A549 (cell line): ENCODE measurements at regions of chr20 and their contacts with region 1.

Region 1: GRCh38 chr20:9407805-9408421 is 106.5 kb upstream of the LAMP5 start:
- DNase-seq: peak; percentile 71 to 77
- ATAC-seq: peak; percentile 94 to 97
- H3K4me3 ChIP-seq: no peak overlapping the region
- H3K27ac ChIP-seq: no peak overlapping the region
- H3K4me1 ChIP-seq: peaks cover 16% of the 10 kb centered on the region; the same call in 2 of the 3 replicates
- CTCF ChIP-seq: peak; percentile 97
- EP300 ChIP-seq: no peak
- POLR2A ChIP-seq: no peak
- RAD21 ChIP-seq: peak; percentile 95 to 97

Region 2: DNA sequence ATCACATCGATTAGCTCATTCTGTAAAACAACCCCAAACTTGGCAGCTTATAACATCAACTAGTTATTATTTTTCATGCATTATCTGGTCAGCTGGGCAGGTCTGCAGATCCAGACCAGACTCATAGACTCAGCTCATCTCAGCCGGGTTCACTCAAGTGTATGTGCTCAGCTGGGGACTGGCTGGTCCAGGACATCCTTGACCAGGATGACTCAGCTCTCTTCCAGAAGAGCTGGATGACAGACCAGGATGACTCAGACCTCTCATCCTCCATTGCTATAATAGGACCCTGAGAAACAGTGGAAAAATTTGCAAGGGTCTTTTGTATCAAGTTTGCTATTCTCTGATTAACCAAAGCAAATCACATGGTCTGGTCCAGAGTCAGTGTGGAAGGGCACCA is 651.5 kb before region 1 on chr20:
- CTCF ChIA-PET with region 1: interaction called, 12 read pairs
- POLR2A ChIA-PET with region 1: no interaction called
- DNase-seq: peak; percentile 87 to 93
- ATAC-seq: peak; percentile 96
- H3K4me3 ChIP-seq: no peak overlapping the region
- H3K27ac ChIP-seq: peak overlapping the region; percentile 65 to 78
- H3K4me1 ChIP-seq: peaks cover 21% of the 10 kb centered on the region
- CTCF ChIP-seq: no peak
- EP300 ChIP-seq: 0 out of 5 replicates have a peak, but pooled peaks of 1 of the 2 experiments have one; percentile 9
- POLR2A ChIP-seq: no peak
- RAD21 ChIP-seq: no peak

Region 3: GRCh38 chr20:9442858-9443257 is 34.9 kb after region 1 on chr20:
- CTCF ChIA-PET with region 1: interaction called, 51 read pairs
- POLR2A ChIA-PET with region 1: no interaction called
- DNase-seq: peak in 1 of 2 experiments; percentile 39
- ATAC-seq: peak in 1 of 2 experiments; percentile 52; a peak in 2 of 6 replicates
- H3K4me3 ChIP-seq: no peak overlapping the region
- H3K27ac ChIP-seq: no peak overlapping the region
- H3K4me1 ChIP-seq: no peaks in the 10 kb centered on the region
- CTCF ChIP-seq: no peak
- EP300 ChIP-seq: no peak
- POLR2A ChIP-seq: no peak
- RAD21 ChIP-seq: no peak

Region 4: GRCh38 chr20:9467995-9468394 is 60.1 kb after region 1 on chr20:
- CTCF ChIA-PET with region 1: interaction called, 14 read pairs
- POLR2A ChIA-PET with region 1: no interaction called
- DNase-seq: peak; percentile 16 to 17
- ATAC-seq: peak in 1 of 2 experiments; percentile 76; a peak in 3 of 6 replicates
- H3K4me3 ChIP-seq: no peak overlapping the region
- H3K27ac ChIP-seq: no peak overlapping the region
- H3K4me1 ChIP-seq: no peaks in the 10 kb centered on the region
- CTCF ChIP-seq: peak; percentile 61
- EP300 ChIP-seq: no peak
- POLR2A ChIP-seq: no peak
- RAD21 ChIP-seq: peak; percentile 63 to 66

Region 5: DNA sequence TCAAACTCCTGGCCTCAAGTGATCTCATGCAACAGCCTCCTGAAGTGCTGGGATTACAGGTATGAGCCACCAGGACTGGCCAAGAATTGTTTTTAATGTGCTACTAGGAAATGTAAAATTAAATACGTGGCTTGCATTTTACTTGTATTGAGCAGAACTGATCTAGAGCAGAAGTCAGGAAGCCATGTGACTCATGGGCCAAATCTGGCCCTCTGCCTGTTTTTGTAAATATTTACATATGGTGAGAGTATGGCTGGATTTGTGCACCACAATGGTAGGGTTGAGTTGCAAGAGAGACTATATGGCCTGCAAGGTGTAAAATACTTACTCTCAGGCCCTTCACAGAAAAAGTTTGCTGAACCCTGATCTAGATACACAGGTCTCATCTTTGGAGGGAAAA is 182.3 kb after region 1 on chr20:
- CTCF ChIA-PET with region 1: interaction called, 28 read pairs
- POLR2A ChIA-PET with region 1: no interaction called
- DNase-seq: peak in 1 of 2 experiments; percentile 69
- ATAC-seq: peak; percentile 63 to 84; a peak in 5 of 6 replicates
- H3K4me3 ChIP-seq: no peak overlapping the region
- H3K27ac ChIP-seq: peak overlapping the region; percentile 61 to 77
- H3K4me1 ChIP-seq: peaks cover 48% of the 10 kb centered on the region
- CTCF ChIP-seq: no peak
- EP300 ChIP-seq: no peak
- POLR2A ChIP-seq: no peak
- RAD21 ChIP-seq: no peak

Region 6: DNA sequence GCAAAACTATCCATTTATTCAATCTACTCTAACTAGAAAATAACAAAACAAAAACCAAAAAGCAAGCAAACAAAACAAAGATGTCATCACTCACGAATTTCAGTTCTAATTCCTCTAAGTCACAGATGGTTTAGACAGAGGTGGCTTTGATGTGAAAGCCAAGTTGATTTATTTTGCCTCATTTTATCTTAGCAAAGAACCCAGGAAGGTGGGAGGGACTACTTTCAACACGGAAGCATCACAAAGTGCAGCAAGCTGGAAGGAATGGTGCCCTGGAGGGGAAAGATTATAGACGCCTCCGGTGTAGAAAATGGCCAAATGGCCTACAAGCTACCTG is 194.9 kb after region 1 on chr20:
- CTCF ChIA-PET with region 1: interaction called, 385 read pairs
- POLR2A ChIA-PET with region 1: no interaction called
- DNase-seq: no peak
- ATAC-seq: no peak
- H3K4me3 ChIP-seq: no peak overlapping the region
- H3K27ac ChIP-seq: no peak overlapping the region
- H3K4me1 ChIP-seq: no peaks in the 10 kb centered on the region
- CTCF ChIP-seq: no peak
- EP300 ChIP-seq: no peak
- POLR2A ChIP-seq: no peak
- RAD21 ChIP-seq: no peak

Region 7: GRCh38 chr20:9756660-9757059 is 348.7 kb after region 1 on chr20:
- CTCF ChIA-PET with region 1: no interaction called
- POLR2A ChIA-PET with region 1: no interaction called
- DNase-seq: no peak
- ATAC-seq: no peak
- H3K4me3 ChIP-seq: no peak overlapping the region
- H3K27ac ChIP-seq: no peak overlapping the region
- H3K4me1 ChIP-seq: no peaks in the 10 kb centered on the region
- CTCF ChIP-seq: no peak
- EP300 ChIP-seq: no peak
- POLR2A ChIP-seq: no peak
- RAD21 ChIP-seq: no peak